ENCODE measurements at regions of chr3 and their contacts with region 1.

Region 1: GRCh38 chr3:58217209-58217811 is 6.5 kb upstream of the DNASE1L3 start:
- DNase-seq: peak in 1 of 2 experiments; percentile 82
- H3K4me3 ChIP-seq: peak overlapping the region in 3 of 4 experiments; percentile 24 to 49 (median 36); a peak in 3 of 8 replicates
- H3K27ac ChIP-seq: no peak overlapping the region; the same call in 1 of the 2 replicates
- H3K4me1 ChIP-seq: peaks cover 0 to 3% (median under 1%) of the 10 kb centered on the region in 4 experiments; a peak in 3 of 7 replicates
- H3K27me3 ChIP-seq: no peaks in the 10 kb centered on the region
- CTCF ChIP-seq: peak; percentile 80 to 94 (median 81)
- EP300 ChIP-seq: no peak
- POLR2A ChIP-seq: no peak
- RAD21 ChIP-seq: peak; percentile 47 to 58

Region 2: DNA sequence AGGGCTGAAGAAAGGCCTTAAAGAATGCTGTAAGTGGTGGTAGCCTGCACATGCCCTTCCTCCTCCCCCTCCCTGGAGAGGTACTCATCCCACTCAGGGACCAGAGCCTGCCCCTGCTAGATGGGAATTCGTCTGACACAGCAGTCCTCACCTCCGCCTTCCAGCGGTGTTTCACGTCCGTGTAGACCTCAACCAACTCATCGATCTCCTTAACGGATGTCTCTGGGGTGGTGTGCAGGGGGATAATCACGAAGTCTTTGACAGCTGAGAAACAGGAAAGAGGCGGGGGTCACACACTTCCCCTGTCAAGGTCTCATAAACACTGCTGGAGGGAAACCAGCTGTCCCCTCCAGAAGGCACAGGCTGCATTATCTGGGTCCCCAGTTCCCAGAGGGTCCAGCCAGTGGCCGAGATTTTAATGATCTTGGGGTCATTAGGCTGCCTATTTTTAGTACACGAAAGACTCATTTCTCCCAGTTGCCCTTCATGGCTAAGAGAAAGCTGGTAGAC is 16.4 kb before region 1 on chr3:
- CTCF ChIA-PET with region 1: interaction called, 15 read pairs
- POLR2A ChIA-PET with region 1: no interaction called
- DNase-seq: no peak
- H3K4me3 ChIP-seq: no peak overlapping the region
- H3K27ac ChIP-seq: no peak overlapping the region
- H3K4me1 ChIP-seq: no peaks in the 10 kb centered on the region
- H3K27me3 ChIP-seq: no peaks in the 10 kb centered on the region
- CTCF ChIP-seq: no peak
- EP300 ChIP-seq: no peak
- POLR2A ChIP-seq: no peak
- RAD21 ChIP-seq: no peak

Region 3: GRCh38 chr3:58206406-58207011 is 10.8 kb before region 1 on chr3:
- CTCF ChIA-PET with region 1: interaction called, 11 read pairs
- POLR2A ChIA-PET with region 1: no interaction called
- DNase-seq: no peak
- H3K4me3 ChIP-seq: no peak overlapping the region
- H3K27ac ChIP-seq: no peak overlapping the region
- H3K4me1 ChIP-seq: no peaks in the 10 kb centered on the region
- H3K27me3 ChIP-seq: peaks cover 0 to 3% (median 0%) of the 10 kb centered on the region in 4 experiments; a peak in 1 of 7 replicates
- CTCF ChIP-seq: no peak
- EP300 ChIP-seq: no peak
- POLR2A ChIP-seq: no peak
- RAD21 ChIP-seq: no peak

Region 4: GRCh38 chr3:58237238-58237940 is 20.1 kb after region 1 on chr3 and contains the start of gene ABHD6:
- CTCF ChIA-PET with region 1: interaction called, 47 read pairs
- POLR2A ChIA-PET with region 1: interaction called, 5 read pairs
- DNase-seq: peak in 1 of 2 experiments; percentile 94
- H3K4me3 ChIP-seq: peak within 1 kb of the TSS; percentile 75 to 90 (median 87)
- H3K27ac ChIP-seq: no peak within 1 kb of the TSS
- H3K4me1 ChIP-seq: peaks cover 0 to 6% (median 3%) of the 10 kb centered on the region in 4 experiments; a peak in 5 of 7 replicates
- H3K27me3 ChIP-seq: peaks cover 9 to 31% (median 30%) of the 10 kb centered on the region in 4 experiments
- CTCF ChIP-seq: peak; percentile 2 to 48 (median 26)
- EP300 ChIP-seq: no peak
- POLR2A ChIP-seq: no peak
- RAD21 ChIP-seq: peak; percentile 52 to 63; a peak in 3 of 4 replicates
- total RNA-seq, gene ABHD6: 5.9 and 6.3 TPM in 2 replicates

Region 5: GRCh38 chr3:58249358-58250092 is 32.2 kb after region 1 on chr3:
- CTCF ChIA-PET with region 1: interaction called, 10 read pairs
- POLR2A ChIA-PET with region 1: no interaction called
- DNase-seq: no peak
- H3K4me3 ChIP-seq: no peak overlapping the region
- H3K27ac ChIP-seq: no peak overlapping the region
- H3K4me1 ChIP-seq: no peaks in the 10 kb centered on the region; a peak in 2 of 7 replicates
- H3K27me3 ChIP-seq: no peaks in the 10 kb centered on the region; a peak in 1 of 7 replicates
- CTCF ChIP-seq: peak in 1 of 3 experiments; percentile 21; a peak in 1 of 4 replicates
- EP300 ChIP-seq: no peak
- POLR2A ChIP-seq: no peak
- RAD21 ChIP-seq: 0 out of 4 replicates have a peak, but pooled peaks of 1 of the 2 experiments have one; percentile 4

Region 6: GRCh38 chr3:58305882-58306711 is 88.8 kb after region 1 on chr3 and contains the starts of genes HTD2 and RPP14:
- CTCF ChIA-PET with region 1: interaction called, 128 read pairs
- POLR2A ChIA-PET with region 1: interaction called, 3 read pairs
- DNase-seq: peak; percentile 90 to 99
- H3K4me3 ChIP-seq: peak within 1 kb of the TSS; percentile 82 to 95 (median 93)
- H3K27ac ChIP-seq: peak within 1 kb of the TSS; percentile 97
- H3K4me1 ChIP-seq: no peaks in the 10 kb centered on the region
- H3K27me3 ChIP-seq: no peaks in the 10 kb centered on the region; a peak in 1 of 7 replicates
- CTCF ChIP-seq: peak; percentile 86 to 98 (median 92)
- EP300 ChIP-seq: peak in 1 of 2 experiments; percentile 63; a peak in 1 of 3 replicates
- POLR2A ChIP-seq: peak; percentile 75 to 96
- RAD21 ChIP-seq: peak; percentile 28 to 47; a peak in 3 of 4 replicates
- total RNA-seq, gene HTD2: 10.3 and 10.8 TPM in 2 replicates
- total RNA-seq, gene RPP14: 19.8 and 23.4 TPM in 2 replicates

Measured in H1 (cell line).